Gastrocnemius medialis (tissue), 4 donors: ENCODE measurements at regions of chr11 and their contacts with region 1.

Region 1: GRCh38 chr11:95835768-95836488 is 45.6 kb downstream of the CEP57 start:
- DNase-seq: peak; percentile 19 to 57
- ATAC-seq: peak; percentile 92 to 99
- H3K4me3 ChIP-seq: no peak overlapping the region
- H3K27ac ChIP-seq: peak overlapping the region in 3 of 4 donors; percentile 5 to 22 (median 15)
- H3K4me1 ChIP-seq: peaks cover 0 to 8% of the 10 kb centered on the region in 2 donors
- H3K27me3 ChIP-seq: no peaks in the 10 kb centered on the region
- CTCF ChIP-seq: peak; percentile 61 to 87 (median 74)
- POLR2A ChIP-seq: no peak

Region 2: GRCh38 chr11:95680169-95680929 is 155.6 kb before region 1 on chr11:
- in situ Hi-C with region 1: no loop called
- intact Hi-C with region 1: no loop called
- DNase-seq: no peak
- ATAC-seq: peak; percentile 74 to 77
- H3K4me3 ChIP-seq: no peak overlapping the region
- H3K27ac ChIP-seq: peak overlapping the region in 2 of 4 donors; percentile 1 to 28
- H3K4me1 ChIP-seq: peaks cover 10 to 23% of the 10 kb centered on the region in 2 donors
- H3K27me3 ChIP-seq: no peaks in the 10 kb centered on the region
- CTCF ChIP-seq: no peak
- POLR2A ChIP-seq: no peak

Region 3: DNA sequence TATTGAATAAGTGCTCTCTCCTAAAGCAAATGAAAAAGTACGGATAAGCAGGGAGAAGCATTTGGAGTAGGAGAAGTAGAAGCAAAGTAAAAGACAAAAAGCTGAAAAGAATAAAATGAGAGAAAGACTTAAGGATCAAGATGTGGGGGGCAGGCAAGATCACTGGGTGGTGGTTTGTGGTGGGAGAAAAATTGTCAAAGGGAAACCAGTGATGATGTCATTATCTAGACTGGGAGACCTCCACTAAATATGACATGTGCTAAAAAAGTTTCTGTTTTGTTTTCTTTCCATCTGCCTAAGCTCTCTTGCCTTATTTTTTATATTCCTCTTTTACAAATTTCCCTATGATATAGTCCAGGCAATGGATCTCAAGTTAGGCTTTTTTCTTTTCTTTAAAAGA is 521.9 kb after region 1 on chr11:
- in situ Hi-C with region 1: loop called in 1 of 4 experiments (anchors 25 kb)
- intact Hi-C with region 1: no loop called
- DNase-seq: no peak
- ATAC-seq: no peak
- H3K4me3 ChIP-seq: no peak overlapping the region
- H3K27ac ChIP-seq: no peak overlapping the region
- H3K4me1 ChIP-seq: no peaks in the 10 kb centered on the region
- H3K27me3 ChIP-seq: no peaks in the 10 kb centered on the region
- CTCF ChIP-seq: no peak
- POLR2A ChIP-seq: no peak

Region 4: DNA sequence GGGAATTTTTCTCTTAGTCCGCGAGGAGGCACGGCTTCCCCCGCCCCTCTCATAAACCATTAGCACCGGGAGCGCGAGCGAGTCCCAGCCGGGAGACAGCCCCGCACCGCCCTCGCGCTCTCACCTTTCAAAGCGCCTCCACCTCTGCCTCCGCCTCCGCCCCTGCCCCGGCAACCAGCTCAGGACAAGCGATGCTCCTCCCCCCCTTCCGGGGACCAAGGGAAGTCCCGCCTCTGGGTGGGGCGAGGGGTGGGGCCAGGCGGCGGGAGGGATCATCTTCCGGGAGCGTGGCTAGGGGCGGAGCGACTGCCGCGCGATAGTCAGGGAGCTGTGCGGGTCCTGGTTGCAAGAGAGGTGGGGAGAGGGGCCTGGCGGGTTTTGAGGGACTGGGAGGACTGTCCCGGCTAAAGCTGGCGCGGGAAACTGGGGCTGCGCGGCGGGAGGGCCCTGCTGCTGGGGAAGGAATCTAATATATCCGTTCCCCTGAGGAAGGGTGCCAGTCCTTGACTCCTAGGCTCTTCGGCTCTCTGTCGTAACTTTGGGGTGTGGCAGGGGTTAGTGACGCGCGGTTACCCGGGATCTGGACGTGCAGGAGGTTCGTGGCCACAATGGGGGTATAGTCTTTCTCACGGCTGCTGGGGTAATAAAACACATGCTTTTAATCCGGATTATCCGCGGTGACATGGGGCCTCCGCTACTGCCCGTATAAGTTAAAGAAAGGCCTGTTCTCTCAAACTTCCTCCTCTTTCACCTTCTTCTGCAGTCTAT is 554.0 kb after region 1 on chr11 and contains the starts of genes CCDC82 and JRKL:
- in situ Hi-C with region 1: loop called in 1 of 4 experiments (anchors 25 kb)
- intact Hi-C with region 1: no loop called
- DNase-seq: peak; percentile 95 to 96
- ATAC-seq: peak; percentile 94 to 95
- H3K4me3 ChIP-seq: peak within 1 kb of the TSS; percentile 81 to 93 (median 92)
- H3K27ac ChIP-seq: peak within 1 kb of the TSS; percentile 87 to 95 (median 91)
- H3K4me1 ChIP-seq: peaks cover 14 to 19% of the 10 kb centered on the region in 2 donors
- H3K27me3 ChIP-seq: no peaks in the 10 kb centered on the region
- CTCF ChIP-seq: no peak
- POLR2A ChIP-seq: peak; percentile 89 to 90
- total RNA-seq, gene CCDC82: 4.6 to 9.1 (median 6.6) TPM
- total RNA-seq, gene JRKL: 2.9 to 5.8 (median 3.6) TPM

Region 5: DNA sequence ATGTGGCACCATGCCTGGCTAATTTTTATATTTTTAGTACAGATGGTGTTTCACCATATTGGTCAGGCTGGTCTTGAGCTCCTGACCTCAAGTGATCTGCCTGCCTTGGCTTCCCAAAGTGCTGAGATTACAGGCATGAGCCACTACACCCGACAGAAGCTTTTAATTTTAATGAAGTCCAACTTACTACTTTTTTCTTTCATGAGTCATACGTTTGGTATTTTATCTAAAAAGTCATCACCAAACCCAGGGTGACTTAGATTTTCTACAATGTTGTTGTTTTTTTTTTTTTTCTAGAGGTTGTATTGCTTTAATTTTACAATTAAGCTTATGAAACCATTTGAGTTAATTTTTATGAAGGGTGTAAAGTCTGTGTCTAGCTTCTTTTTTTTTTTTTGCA is 588.8 kb after region 1 on chr11:
- in situ Hi-C with region 1: loop called in 3 of 4 experiments (anchors 5 to 10 kb)
- intact Hi-C with region 1: loop called (anchors 2 kb)
- DNase-seq: no peak
- ATAC-seq: no peak
- H3K4me3 ChIP-seq: no peak overlapping the region
- H3K27ac ChIP-seq: no peak overlapping the region
- H3K4me1 ChIP-seq: no peaks in the 10 kb centered on the region
- H3K27me3 ChIP-seq: peaks cover 0 to 3% (median 0%) of the 10 kb centered on the region in 3 donors
- CTCF ChIP-seq: no peak
- POLR2A ChIP-seq: no peak